B cell (primary cell): ENCODE measurements at regions of chr3 and their contacts with region 1.

Region 1: DNA sequence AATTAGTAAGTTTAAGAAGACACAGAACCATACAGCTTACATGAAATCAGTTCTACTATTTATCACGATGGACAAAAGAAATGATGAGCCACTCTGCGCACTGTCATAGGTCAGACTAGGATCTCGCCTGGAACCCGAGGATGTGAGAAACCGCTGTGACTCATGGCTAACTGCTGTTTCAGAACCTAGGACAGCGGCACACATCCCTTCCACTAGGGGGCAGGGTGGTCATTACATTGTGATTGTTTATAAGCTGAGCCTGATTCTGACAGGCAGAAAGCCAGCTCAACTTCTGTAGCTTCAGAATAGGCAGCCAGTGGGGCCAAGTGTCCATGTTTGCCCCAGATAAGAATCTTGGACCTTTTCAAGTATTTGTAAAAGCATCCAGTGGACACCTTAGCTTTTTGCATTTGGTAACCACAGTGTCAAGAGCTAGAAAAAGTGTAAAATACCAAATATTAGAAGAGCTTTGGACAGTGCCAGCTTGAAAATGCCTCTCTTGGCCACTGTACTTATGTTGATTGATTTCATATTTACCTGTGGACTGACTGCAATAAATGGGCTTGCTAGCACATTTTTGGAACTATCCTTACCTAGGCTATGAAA is 115.8 kb downstream of the KBTBD8 start:
- DNase-seq: peak; percentile 80
- ATAC-seq: peak; percentile 94
- H3K4me3 ChIP-seq: no peak overlapping the region
- H3K4me3 Mint-ChIP-seq: no peak overlapping the region
- H3K27ac ChIP-seq: no peak overlapping the region
- H3K27ac Mint-ChIP-seq: no peak overlapping the region
- H3K4me1 ChIP-seq: no peaks in the 10 kb centered on the region
- H3K4me1 Mint-ChIP-seq: peaks cover 1% of the 10 kb centered on the region
- H3K27me3 ChIP-seq: peaks cover 0 to 6% (median 2%) of the 10 kb centered on the region in 4 experiments
- H3K27me3 Mint-ChIP-seq: peaks cover 17% of the 10 kb centered on the region
- CTCF ChIP-seq: peak; percentile 96

Region 2: GRCh38 chr3:66962664-66963063 is 151.2 kb before region 1 on chr3:
- CTCF ChIA-PET with region 1: interaction called, 13 read pairs
- POLR2A ChIA-PET with region 1: no interaction called
- intact Hi-C with region 1: no loop called
- DNase-seq: no peak
- ATAC-seq: no peak
- H3K4me3 ChIP-seq: no peak overlapping the region
- H3K4me3 Mint-ChIP-seq: no peak overlapping the region
- H3K27ac ChIP-seq: no peak overlapping the region
- H3K27ac Mint-ChIP-seq: no peak overlapping the region
- H3K4me1 ChIP-seq: no peaks in the 10 kb centered on the region
- H3K4me1 Mint-ChIP-seq: no peaks in the 10 kb centered on the region
- H3K27me3 ChIP-seq: no peaks in the 10 kb centered on the region
- H3K27me3 Mint-ChIP-seq: peaks cover 17% of the 10 kb centered on the region
- CTCF ChIP-seq: no peak

Region 3: DNA sequence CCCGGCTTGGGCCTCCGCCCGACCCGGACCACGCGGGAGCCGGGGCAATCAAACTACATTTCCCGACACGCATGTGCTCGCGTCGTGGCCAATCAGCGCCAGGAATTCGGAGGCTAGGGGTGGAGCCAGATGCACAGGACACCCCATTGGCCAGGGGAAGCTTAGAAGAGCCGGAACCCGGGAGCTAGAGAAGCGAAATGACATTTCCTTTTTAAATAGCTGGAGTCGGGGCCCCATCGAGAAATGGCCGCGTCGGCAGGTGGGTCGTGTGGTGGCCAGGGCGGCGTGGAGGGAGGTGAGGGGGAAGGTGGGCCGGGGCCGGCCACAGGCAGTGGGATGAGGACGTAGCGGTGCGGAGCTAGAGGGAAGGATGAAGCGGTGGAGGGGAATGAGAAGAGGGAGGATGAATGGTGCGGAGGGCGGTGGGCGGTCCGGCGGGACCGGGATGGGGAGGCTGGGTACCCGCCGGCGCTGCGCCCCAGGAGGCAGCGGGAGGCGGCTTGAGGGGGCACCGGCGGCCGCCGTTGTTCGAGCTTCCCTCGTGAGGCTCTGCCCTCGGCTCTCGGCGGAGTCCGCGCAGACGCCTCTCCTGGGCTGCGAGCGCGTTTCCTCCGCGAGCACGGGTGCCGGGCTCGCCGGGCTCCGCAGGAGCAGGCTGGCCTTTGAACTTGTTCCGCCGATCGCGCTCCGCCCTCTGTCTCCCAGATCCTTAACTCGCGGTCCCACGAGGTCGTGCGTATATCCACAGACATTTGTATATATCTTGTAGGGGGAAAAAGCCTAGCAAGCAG is 115.6 kb before region 1 on chr3 and contains the start of gene KBTBD8:
- CTCF ChIA-PET with region 1: interaction called, 24 read pairs
- POLR2A ChIA-PET with region 1: no interaction called
- intact Hi-C with region 1: loop called (anchors 2 kb)
- DNase-seq: peak; percentile 99
- ATAC-seq: peak; percentile 86
- H3K4me3 ChIP-seq: peak within 1 kb of the TSS; percentile 68 to 90 (median 82)
- H3K4me3 Mint-ChIP-seq: peak within 1 kb of the TSS; percentile 96
- H3K27ac ChIP-seq: peak within 1 kb of the TSS; percentile 79 to 91
- H3K27ac Mint-ChIP-seq: peak within 1 kb of the TSS; percentile 98
- H3K4me1 ChIP-seq: peaks cover 36 to 41% of the 10 kb centered on the region in 2 donors
- H3K4me1 Mint-ChIP-seq: peaks cover 44% of the 10 kb centered on the region
- H3K27me3 ChIP-seq: no peaks in the 10 kb centered on the region
- H3K27me3 Mint-ChIP-seq: peaks cover 4% of the 10 kb centered on the region
- CTCF ChIP-seq: no peak
- total RNA-seq, gene KBTBD8: 27.6 and 32.6 TPM in 2 replicates

Region 4: DNA sequence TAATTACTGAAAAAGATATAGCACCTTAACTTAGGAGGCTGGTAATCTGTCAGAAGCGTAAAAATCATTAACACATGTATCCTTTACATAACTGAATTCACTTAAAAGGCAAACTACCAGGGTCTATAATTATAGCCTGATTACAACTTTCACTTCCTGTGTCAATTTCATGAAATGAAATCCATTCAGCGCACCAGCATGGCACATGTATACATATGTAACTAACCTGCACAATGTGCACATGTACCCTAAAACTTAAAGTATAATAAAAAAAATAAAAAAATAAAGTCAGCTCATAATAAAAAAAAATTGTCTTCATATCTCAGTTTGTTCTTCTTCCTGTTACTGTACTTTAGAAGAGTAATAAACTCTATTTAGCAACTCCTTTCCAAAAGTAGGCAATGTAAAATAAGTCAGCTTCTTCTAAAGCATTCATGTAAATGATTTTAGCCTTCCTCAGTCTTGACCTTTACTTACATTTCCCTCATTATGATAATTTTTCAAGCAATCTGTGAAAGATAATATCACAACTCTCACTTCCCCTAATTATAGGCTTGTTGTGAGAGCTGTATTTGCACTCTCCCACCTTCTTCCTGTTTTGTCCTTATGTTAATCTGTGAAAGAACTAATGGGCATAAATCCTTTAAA is 65.7 kb before region 1 on chr3:
- CTCF ChIA-PET with region 1: interaction called, 58 read pairs
- POLR2A ChIA-PET with region 1: no interaction called
- intact Hi-C with region 1: loop called (anchors 1 kb)
- DNase-seq: peak; percentile 77
- ATAC-seq: peak; percentile 89
- H3K4me3 ChIP-seq: peak overlapping the region in 4 of 5 experiments; percentile 3 to 28 (median 16)
- H3K4me3 Mint-ChIP-seq: peak overlapping the region; percentile 80
- H3K27ac ChIP-seq: peak overlapping the region; percentile 83 to 87
- H3K27ac Mint-ChIP-seq: peak overlapping the region; percentile 84
- H3K4me1 ChIP-seq: peaks cover 40 to 53% of the 10 kb centered on the region in 2 donors
- H3K4me1 Mint-ChIP-seq: peaks cover 44% of the 10 kb centered on the region
- H3K27me3 ChIP-seq: no peaks in the 10 kb centered on the region
- H3K27me3 Mint-ChIP-seq: no peaks in the 10 kb centered on the region
- CTCF ChIP-seq: no peak

Region 5: DNA sequence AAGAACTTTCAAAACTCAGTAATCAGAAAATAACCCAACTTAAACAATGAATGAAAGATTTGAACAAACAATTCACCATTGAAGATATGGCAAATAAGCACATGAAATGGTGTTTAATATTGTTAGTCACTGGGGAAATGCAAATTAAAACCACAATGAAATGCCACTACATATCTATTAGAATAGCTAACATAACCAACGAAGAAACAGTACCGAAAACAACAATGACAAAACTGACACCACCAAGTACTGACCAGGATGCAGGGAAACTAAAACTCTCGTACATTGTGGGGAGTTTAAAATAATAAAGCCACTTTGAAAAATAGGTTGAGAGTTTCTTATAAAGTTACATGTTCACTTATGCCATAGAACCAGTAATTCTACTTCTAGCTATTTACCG is 46.7 kb before region 1 on chr3:
- CTCF ChIA-PET with region 1: no interaction called
- POLR2A ChIA-PET with region 1: no interaction called
- intact Hi-C with region 1: no loop called
- DNase-seq: no peak
- ATAC-seq: no peak
- H3K4me3 ChIP-seq: no peak overlapping the region
- H3K4me3 Mint-ChIP-seq: no peak overlapping the region
- H3K27ac ChIP-seq: no peak overlapping the region
- H3K27ac Mint-ChIP-seq: no peak overlapping the region
- H3K4me1 ChIP-seq: no peaks in the 10 kb centered on the region
- H3K4me1 Mint-ChIP-seq: peaks cover 23% of the 10 kb centered on the region
- H3K27me3 ChIP-seq: no peaks in the 10 kb centered on the region
- H3K27me3 Mint-ChIP-seq: no peaks in the 10 kb centered on the region
- CTCF ChIP-seq: no peak

Region 6: GRCh38 chr3:67790043-67790442 is 676.1 kb after region 1 on chr3:
- CTCF ChIA-PET with region 1: interaction called, 54 read pairs
- POLR2A ChIA-PET with region 1: no interaction called
- intact Hi-C with region 1: loop called (anchors 1 kb)
- DNase-seq: peak; percentile 60
- ATAC-seq: peak; percentile 58
- H3K4me3 ChIP-seq: no peak overlapping the region
- H3K4me3 Mint-ChIP-seq: no peak overlapping the region
- H3K27ac ChIP-seq: no peak overlapping the region
- H3K27ac Mint-ChIP-seq: no peak overlapping the region
- H3K4me1 ChIP-seq: no peaks in the 10 kb centered on the region
- H3K4me1 Mint-ChIP-seq: no peaks in the 10 kb centered on the region
- H3K27me3 ChIP-seq: no peaks in the 10 kb centered on the region
- H3K27me3 Mint-ChIP-seq: peaks cover 6% of the 10 kb centered on the region
- CTCF ChIP-seq: peak; percentile 73

Region 7: DNA sequence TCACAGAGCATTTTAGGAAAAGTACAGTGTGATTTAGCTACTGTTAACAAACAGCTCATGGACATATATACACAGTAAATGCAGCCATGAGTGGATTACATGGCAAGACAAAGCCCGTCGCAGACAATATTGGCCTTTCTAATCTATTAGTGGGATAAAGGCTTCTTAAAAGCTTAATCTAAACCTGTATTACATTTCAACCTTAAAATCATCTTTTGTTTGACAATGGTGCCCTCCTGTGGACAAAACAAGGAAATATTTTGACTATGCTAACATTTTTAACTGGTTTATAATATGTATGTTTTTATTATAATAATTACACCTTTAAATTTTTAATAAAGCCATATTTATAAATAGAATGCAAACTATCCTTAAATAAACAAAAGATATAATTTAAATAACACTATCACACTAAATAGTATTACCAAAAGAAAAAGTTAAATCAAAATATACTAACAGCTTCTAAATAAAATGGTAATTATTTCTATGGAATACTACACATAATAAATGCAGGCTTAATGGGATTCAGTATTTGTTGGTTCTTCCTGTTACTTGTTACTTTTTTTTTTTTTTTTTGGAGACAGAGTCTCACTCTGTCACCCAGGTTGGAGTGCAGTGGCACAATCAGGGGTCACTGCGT is 1779.8 kb after region 1 on chr3:
- CTCF ChIA-PET with region 1: interaction called, 25 read pairs
- POLR2A ChIA-PET with region 1: no interaction called
- intact Hi-C with region 1: loop called (anchors 1 kb)
- DNase-seq: peak; percentile 45
- ATAC-seq: no peak
- H3K4me3 ChIP-seq: no peak overlapping the region
- H3K4me3 Mint-ChIP-seq: no peak overlapping the region
- H3K27ac ChIP-seq: no peak overlapping the region
- H3K27ac Mint-ChIP-seq: no peak overlapping the region
- H3K4me1 ChIP-seq: no peaks in the 10 kb centered on the region
- H3K4me1 Mint-ChIP-seq: no peaks in the 10 kb centered on the region
- H3K27me3 ChIP-seq: no peaks in the 10 kb centered on the region
- H3K27me3 Mint-ChIP-seq: peaks cover 16% of the 10 kb centered on the region
- CTCF ChIP-seq: peak; percentile 77